Gastrocnemius medialis (tissue), 4 donors: ENCODE measurements at regions of chr2 and their contacts with region 1.

Region 1: GRCh38 chr2:27322766-27323595 is at the start of gene MPV17:
- DNase-seq: peak; percentile 93 to 96
- ATAC-seq: peak; percentile 60 to 61
- H3K4me3 ChIP-seq: peak within 1 kb of the TSS; percentile 80 to 89 (median 82)
- H3K27ac ChIP-seq: peak within 1 kb of the TSS; percentile 95 to 100 (median 98)
- H3K4me1 ChIP-seq: peaks cover 37 to 40% of the 10 kb centered on the region in 2 donors
- H3K27me3 ChIP-seq: no peaks in the 10 kb centered on the region
- CTCF ChIP-seq: peak in 1 of 5 experiments; percentile 20
- POLR2A ChIP-seq: peak; percentile 86 to 91
- total RNA-seq, gene MPV17: 9.9 to 16.0 (median 11.5) TPM

Region 2: DNA sequence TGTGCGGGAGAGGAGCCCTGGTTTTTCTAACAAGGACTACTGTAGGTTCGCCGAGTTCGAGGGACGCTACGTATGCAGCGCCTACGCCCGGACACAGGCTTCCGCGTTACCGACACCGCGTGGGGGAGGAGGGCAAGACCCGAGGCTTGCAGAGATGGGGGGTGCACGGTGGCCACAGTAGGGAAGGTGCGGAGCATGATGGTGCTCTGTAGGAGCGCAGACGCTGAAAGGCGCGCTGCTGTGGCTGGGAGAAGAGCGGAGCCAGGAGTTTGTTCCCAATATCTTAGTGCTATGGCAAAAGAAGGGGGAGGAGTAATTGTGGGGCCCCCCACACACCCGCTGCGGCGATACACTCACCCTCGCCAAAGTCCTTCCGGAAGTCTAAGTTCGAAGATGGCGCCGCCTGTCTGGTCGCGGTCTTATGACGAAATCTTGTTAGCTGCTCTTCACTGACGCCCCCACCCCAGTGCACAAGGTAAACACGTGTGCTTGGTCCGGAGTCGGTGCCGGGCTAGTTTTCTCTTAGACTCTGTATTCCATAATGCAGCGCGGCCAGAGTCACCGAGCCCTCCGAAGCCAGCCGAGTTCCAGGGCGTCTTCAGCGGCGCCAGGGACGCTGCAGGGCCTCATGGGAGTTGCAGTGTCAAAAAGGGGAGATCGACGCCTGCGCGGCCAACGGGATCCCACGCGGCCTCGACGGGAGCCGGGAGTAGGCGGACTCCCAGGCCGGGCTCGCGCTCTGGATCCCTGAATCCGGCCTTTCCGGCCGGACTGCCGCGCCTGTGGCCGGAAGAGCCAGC is 33.6 kb after region 1 on chr2 and contains the start of gene GTF3C2:
- in situ Hi-C with region 1: no loop called
- intact Hi-C with region 1: loop called (anchors 1 kb)
- DNase-seq: peak; percentile 90 to 95
- ATAC-seq: peak; percentile 82 to 88
- H3K4me3 ChIP-seq: peak within 1 kb of the TSS; percentile 69 to 98 (median 93)
- H3K27ac ChIP-seq: peak within 1 kb of the TSS; percentile 92 to 99 (median 94)
- H3K4me1 ChIP-seq: peaks cover 42 to 50% of the 10 kb centered on the region in 2 donors
- H3K27me3 ChIP-seq: no peaks in the 10 kb centered on the region
- CTCF ChIP-seq: peak in 2 of 5 experiments; percentile 26 to 46
- POLR2A ChIP-seq: peak; percentile 50
- total RNA-seq, gene GTF3C2: 25.3 to 45.6 (median 40.5) TPM

Region 3: DNA sequence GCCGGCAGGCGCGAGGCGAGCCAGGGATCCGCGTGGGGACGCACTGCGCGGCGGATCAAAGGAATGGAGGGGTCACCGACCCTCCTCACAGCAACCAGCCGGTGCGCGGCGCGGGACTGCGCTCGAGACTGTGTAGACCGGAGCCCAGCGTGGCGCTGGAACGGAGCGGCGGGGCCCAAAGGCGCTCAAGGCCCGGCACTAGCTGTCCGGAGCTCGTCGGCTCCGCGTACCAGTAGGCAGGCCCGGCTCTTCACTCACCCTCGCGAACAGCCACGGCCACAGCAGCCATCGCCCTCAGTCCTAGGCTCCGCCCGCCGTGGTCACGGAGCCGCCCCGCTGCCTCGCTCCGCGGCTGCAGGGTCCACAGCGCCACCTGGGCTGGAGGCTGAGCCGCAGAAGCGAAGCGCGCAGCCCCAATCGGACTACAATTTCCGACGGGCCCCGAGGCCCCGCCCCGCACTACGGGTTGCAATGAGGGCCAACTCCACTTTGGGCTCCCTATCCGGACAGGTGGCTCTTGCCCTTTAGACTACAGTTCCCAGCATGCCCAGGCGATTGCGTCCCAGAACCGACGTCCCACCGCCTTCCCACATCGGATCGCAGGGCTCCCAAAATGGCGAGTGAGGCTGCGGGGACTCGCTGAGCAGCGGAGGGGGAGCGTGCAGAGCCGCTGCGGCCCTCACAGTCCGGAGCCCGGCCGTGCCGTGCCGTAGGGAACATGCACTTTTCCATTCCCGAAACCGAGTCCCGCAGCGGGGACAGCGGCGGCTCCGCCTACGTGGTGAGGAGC is 47.2 kb after region 1 on chr2 and contains the starts of genes EIF2B4 and SNX17:
- in situ Hi-C with region 1: no loop called
- intact Hi-C with region 1: loop called (anchors 1 kb)
- DNase-seq: peak; percentile 99
- ATAC-seq: peak; percentile 92 to 93
- H3K4me3 ChIP-seq: peak within 1 kb of the TSS; percentile 96 to 100 (median 98)
- H3K27ac ChIP-seq: peak within 1 kb of the TSS; percentile 94 to 98 (median 96)
- H3K4me1 ChIP-seq: peaks cover 28 to 35% of the 10 kb centered on the region in 2 donors
- H3K27me3 ChIP-seq: no peaks in the 10 kb centered on the region
- CTCF ChIP-seq: peak; percentile 53 to 81 (median 74)
- POLR2A ChIP-seq: peak; percentile 68 to 81
- total RNA-seq, gene EIF2B4: 50.5 to 57.9 (median 53.8) TPM
- total RNA-seq, gene SNX17: 47.2 to 91.5 (median 56.3) TPM

Region 4: GRCh38 chr2:27380626-27381545 is 57.9 kb after region 1 on chr2 and contains the start of gene ZNF513:
- in situ Hi-C with region 1: no loop called
- intact Hi-C with region 1: loop called (anchors 2 kb)
- DNase-seq: peak; percentile 96 to 97
- ATAC-seq: peak; percentile 95
- H3K4me3 ChIP-seq: peak within 1 kb of the TSS; percentile 59 to 77 (median 70)
- H3K27ac ChIP-seq: peak within 1 kb of the TSS; percentile 84 to 91 (median 88)
- H3K4me1 ChIP-seq: peaks cover 18 to 19% of the 10 kb centered on the region in 2 donors
- H3K27me3 ChIP-seq: no peaks in the 10 kb centered on the region
- CTCF ChIP-seq: no peak
- POLR2A ChIP-seq: peak; percentile 63 to 68
- total RNA-seq, gene ZNF513: 2.0 to 7.6 (median 4.5) TPM